GM12878 (cell line): ENCODE measurements at regions of chr9 and their contacts with region 1.

Region 1: DNA sequence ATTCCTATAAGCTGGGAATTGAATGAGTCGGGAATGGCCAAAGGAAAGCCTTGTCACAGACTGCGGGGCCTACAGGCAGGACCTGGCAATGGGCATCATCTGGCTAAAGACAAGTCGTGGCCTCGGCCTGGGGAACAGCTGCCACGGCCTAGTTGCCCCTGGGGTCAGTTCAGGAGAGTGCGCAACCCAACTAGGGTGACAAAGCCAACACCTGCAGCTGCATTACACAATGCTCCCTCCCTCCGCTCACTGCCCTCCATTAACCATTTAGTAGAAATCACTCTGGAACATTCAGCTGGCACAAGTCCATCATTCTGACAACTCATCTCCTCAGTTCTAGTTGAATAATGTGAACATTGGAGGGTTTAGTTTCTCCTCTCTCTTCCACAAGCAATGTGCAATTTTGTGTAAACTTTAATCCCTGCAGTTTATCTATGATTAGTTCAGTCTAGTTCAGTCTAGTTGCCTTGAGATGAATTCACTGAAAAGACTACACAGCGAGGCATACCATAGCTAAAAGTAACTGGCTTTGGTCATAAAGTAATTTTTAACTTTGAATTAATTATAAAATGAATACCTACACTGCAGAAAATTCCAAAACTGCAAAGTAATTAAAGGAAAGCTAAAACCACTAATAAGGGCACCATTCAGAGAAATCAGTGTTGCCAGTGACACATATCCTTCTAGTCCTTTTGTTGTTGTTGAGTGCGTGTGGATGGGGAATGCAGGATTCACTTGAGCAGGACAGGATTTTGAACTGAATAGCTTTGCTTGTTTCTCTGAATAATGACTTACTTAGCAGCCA is 5.1 kb downstream of the GLDC start:
- DNase-seq: no peak
- ATAC-seq: no peak
- H3K4me3 ChIP-seq: no peak overlapping the region
- H3K27ac ChIP-seq: no peak overlapping the region
- H3K4me1 ChIP-seq: peaks cover 7% of the 10 kb centered on the region; the same call in 1 of the 2 replicates
- H3K27me3 ChIP-seq: no peaks in the 10 kb centered on the region
- CTCF ChIP-seq: no peak
- EP300 ChIP-seq: no peak
- POLR2A ChIP-seq: no peak
- RAD21 ChIP-seq: no peak

Region 2: GRCh38 chr9:6625363-6625762 is 15.1 kb before region 1 on chr9:
- CTCF ChIA-PET with region 1: interaction called, 19 read pairs
- POLR2A ChIA-PET with region 1: interaction called, 5 read pairs
- RAD21 ChIA-PET with region 1: interaction called, 59 read pairs
- SMC1A ChIA-PET with region 1: interaction called, 37 read pairs
- in situ Hi-C with region 1: no loop called
- intact Hi-C with region 1: no loop called
- DNase-seq: no peak
- ATAC-seq: no peak
- H3K4me3 ChIP-seq: no peak overlapping the region
- H3K27ac ChIP-seq: no peak overlapping the region
- H3K4me1 ChIP-seq: peaks cover 13% of the 10 kb centered on the region
- H3K27me3 ChIP-seq: no peaks in the 10 kb centered on the region
- CTCF ChIP-seq: no peak
- EP300 ChIP-seq: no peak
- POLR2A ChIP-seq: no peak
- RAD21 ChIP-seq: no peak